ENCODE measurements at regions of chr15 and their contacts with region 1.

Region 1: DNA sequence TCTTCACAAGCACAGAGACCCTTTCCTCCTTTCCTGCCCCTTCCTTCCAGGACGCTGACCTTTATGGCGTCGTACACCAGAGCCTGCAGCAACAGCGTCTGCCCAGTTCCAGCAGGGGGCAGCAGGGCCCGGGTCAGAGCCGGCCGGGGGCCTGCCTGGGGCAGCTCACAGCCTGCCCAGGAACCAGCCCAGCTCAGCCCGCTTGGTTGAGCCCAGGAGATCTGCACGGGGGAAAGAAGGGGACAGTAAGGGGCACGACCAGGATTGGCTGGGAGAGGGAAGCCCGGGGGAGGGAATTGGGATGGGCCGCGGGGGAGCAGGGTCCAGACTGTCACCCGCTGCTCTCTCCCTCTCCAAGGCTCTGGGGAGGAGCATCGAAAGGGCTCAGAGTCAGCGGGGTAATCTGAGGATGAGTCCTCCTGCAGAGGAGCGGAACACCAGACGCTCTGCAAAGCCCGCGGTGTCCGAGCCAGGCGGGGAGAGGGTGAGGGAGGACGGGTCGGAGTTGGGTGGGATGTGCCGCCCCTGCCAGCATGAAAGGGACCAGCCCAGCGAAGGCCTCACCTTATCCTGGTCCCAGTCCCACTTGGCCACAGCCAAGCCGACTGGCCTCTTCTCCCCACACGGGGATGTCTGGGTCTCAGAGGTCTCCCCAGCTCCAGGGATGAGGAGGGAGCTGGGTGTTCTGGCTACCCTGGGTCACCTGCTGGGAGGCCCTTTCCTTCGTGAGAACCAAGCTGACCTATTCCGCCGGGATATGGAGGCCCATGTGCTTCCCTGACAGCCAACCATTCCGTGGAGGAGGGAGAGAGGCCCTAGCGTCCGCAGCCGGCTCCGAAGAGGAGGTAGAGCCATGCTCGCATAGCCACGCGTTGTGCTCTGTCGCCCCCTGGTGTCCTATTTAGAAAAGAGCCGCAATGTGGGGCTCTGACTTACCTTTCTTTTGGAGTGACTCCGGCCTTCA is 7.4 kb upstream of the IGDCC3 start:
- DNase-seq: peak; percentile 89 to 94
- ATAC-seq: peak; percentile 85 to 94
- H3K4me3 ChIP-seq: peak overlapping the region; percentile 31
- H3K27ac ChIP-seq: peak overlapping the region; percentile 63 to 77
- H3K4me1 ChIP-seq: peaks cover 12% of the 10 kb centered on the region; the same call in 2 of the 3 replicates
- CTCF ChIP-seq: peak; percentile 93
- EP300 ChIP-seq: no peak
- POLR2A ChIP-seq: no peak
- RAD21 ChIP-seq: peak; percentile 93 to 97

Region 2: GRCh38 chr15:65310431-65311137 is 74.6 kb before region 1 on chr15:
- CTCF ChIA-PET with region 1: interaction called, 722 read pairs
- POLR2A ChIA-PET with region 1: no interaction called
- DNase-seq: no peak
- ATAC-seq: no peak
- H3K4me3 ChIP-seq: no peak overlapping the region
- H3K27ac ChIP-seq: no peak overlapping the region
- H3K4me1 ChIP-seq: peaks cover 12% of the 10 kb centered on the region; the same call in 2 of the 3 replicates
- CTCF ChIP-seq: no peak
- EP300 ChIP-seq: no peak
- POLR2A ChIP-seq: no peak
- RAD21 ChIP-seq: no peak

Region 3: DNA sequence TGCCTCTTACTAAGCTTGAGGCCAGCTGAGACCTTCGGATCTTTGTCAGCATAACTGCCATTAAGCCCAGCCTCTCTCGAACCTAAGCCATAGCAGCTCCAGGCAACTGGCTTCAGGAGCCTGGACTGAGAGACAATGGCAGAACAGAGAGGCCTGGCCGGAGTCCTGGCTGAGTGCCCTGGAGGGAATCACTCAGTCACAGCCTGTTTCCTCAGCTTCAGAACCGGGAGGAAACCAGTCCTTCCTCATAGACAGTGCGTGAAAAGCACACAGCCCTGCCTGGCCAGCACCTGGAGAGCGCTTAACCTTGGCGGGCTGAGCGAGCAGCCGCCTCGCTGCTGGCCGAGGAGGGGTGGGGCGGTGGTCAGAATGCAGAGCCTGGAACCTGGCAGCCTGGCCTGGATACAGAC is 59.1 kb before region 1 on chr15:
- CTCF ChIA-PET with region 1: interaction called, 722 read pairs
- POLR2A ChIA-PET with region 1: no interaction called
- DNase-seq: no peak
- ATAC-seq: no peak; a peak in 1 of 6 replicates
- H3K4me3 ChIP-seq: no peak overlapping the region
- H3K27ac ChIP-seq: no peak overlapping the region
- H3K4me1 ChIP-seq: no peaks in the 10 kb centered on the region
- CTCF ChIP-seq: no peak
- EP300 ChIP-seq: no peak
- POLR2A ChIP-seq: no peak
- RAD21 ChIP-seq: no peak

Region 4: GRCh38 chr15:65336493-65337455 is 48.4 kb before region 1 on chr15:
- CTCF ChIA-PET with region 1: interaction called, 32 read pairs
- POLR2A ChIA-PET with region 1: no interaction called
- DNase-seq: no peak
- ATAC-seq: peak in 1 of 2 experiments; percentile 5; a peak in 1 of 6 replicates
- H3K4me3 ChIP-seq: no peak overlapping the region
- H3K27ac ChIP-seq: no peak overlapping the region
- H3K4me1 ChIP-seq: no peaks in the 10 kb centered on the region
- CTCF ChIP-seq: no peak
- EP300 ChIP-seq: no peak
- POLR2A ChIP-seq: no peak
- RAD21 ChIP-seq: no peak

Region 5: DNA sequence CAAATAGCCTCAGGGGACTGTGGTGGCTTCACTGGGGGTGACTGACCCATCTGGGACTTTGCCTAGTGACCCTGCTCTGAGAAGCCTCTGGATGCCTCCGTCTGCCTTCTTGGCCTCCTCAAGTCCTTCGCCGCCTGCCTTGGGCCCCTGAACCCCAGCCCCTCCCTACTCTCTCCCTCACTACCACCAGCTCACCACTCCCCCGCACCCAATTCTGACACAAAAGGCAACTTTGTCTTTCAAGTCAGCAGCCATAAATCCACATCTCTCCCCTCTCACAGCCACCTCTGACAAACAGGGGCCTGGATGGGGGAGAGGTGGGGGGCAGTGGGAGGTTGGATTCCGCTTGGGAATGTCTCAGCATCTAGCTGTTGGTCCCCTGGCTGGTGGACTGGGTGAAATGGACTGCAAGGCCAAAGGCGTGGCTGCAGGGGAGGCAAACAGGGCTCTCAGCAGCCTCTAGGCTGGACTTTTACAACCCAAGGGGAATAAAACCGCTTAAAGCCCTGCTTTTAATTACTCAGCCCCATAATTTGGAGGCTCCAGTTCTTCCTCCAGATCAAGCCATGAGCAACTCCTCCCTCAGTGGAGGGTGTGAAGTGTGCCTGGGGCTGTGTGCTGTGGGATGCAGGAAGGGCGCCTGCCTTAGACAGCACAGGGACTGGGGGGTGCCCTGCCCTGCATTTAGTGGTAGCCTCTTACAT is 40.8 kb before region 1 on chr15:
- CTCF ChIA-PET with region 1: interaction called, 19 read pairs
- POLR2A ChIA-PET with region 1: no interaction called
- DNase-seq: no peak
- ATAC-seq: peak in 1 of 2 experiments; percentile 20; a peak in 2 of 6 replicates
- H3K4me3 ChIP-seq: no peak overlapping the region
- H3K27ac ChIP-seq: no peak overlapping the region
- H3K4me1 ChIP-seq: peaks cover 6% of the 10 kb centered on the region; the same call in 1 of the 3 replicates
- CTCF ChIP-seq: no peak
- EP300 ChIP-seq: no peak
- POLR2A ChIP-seq: no peak
- RAD21 ChIP-seq: no peak

Region 6: DNA sequence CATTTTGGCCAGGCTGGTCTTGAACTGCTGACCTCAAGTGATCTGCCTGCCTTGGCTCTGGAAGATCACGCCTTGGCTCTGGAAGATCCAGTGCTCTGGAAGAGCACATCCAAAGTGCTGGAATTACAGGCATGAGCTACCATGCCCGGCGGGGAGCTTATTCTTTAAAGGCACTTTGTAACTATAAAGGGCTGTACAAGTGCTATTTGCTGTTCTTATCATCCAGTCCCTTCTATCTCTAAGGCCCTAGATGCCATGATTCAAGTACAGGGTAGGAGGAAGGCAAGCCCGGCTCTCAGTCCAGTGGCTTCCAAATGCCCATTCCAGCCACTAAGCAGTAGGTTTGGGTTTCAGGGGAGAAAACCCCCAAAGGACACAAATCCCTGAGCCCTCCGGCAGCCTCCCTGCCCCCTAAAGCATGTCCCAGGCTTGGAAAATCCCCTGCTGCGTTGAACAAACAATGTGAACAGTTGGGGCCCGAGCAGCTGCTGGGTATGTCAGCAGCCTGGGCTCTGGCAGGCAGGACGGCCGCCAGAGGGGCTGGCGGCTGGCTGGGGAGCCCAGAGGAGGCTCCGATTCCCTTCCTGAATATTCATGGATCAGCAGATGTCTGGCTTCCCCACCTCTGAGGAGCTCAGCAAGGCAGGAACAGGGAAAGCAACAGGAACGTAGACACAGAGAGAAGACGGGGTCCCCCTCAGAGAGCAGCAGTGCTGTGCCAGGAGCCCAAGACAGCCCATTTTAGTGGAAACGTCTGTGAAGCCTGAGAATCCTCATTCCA is 29.9 kb after region 1 on chr15:
- CTCF ChIA-PET with region 1: interaction called, 21 read pairs
- POLR2A ChIA-PET with region 1: no interaction called
- DNase-seq: peak; percentile 68 to 71
- ATAC-seq: peak; percentile 45 to 85
- H3K4me3 ChIP-seq: no peak overlapping the region
- H3K27ac ChIP-seq: peak overlapping the region; percentile 47 to 78
- H3K4me1 ChIP-seq: peaks cover 70% of the 10 kb centered on the region
- CTCF ChIP-seq: no peak
- EP300 ChIP-seq: no peak
- POLR2A ChIP-seq: no peak
- RAD21 ChIP-seq: 0 out of 5 replicates have a peak, but pooled peaks of 1 of the 2 experiments have one; percentile 4

Region 7: GRCh38 chr15:65757256-65757655 is 372.1 kb after region 1 on chr15:
- CTCF ChIA-PET with region 1: no interaction called
- POLR2A ChIA-PET with region 1: no interaction called
- DNase-seq: no peak
- ATAC-seq: no peak
- H3K4me3 ChIP-seq: no peak overlapping the region
- H3K27ac ChIP-seq: no peak overlapping the region
- H3K4me1 ChIP-seq: no peaks in the 10 kb centered on the region
- CTCF ChIP-seq: no peak
- EP300 ChIP-seq: no peak
- POLR2A ChIP-seq: no peak
- RAD21 ChIP-seq: no peak

Region 8: GRCh38 chr15:66994927-66995656 is 1609.9 kb after region 1 on chr15:
- CTCF ChIA-PET with region 1: no interaction called
- POLR2A ChIA-PET with region 1: no interaction called
- DNase-seq: peak in 1 of 2 experiments; percentile 25
- ATAC-seq: peak; percentile 47 to 68; a peak in 4 of 6 replicates
- H3K4me3 ChIP-seq: no peak overlapping the region
- H3K27ac ChIP-seq: no peak overlapping the region
- H3K4me1 ChIP-seq: peaks cover 7% of the 10 kb centered on the region; the same call in 1 of the 3 replicates
- CTCF ChIP-seq: no peak
- EP300 ChIP-seq: no peak
- POLR2A ChIP-seq: no peak
- RAD21 ChIP-seq: no peak

Measured in A549 (cell line).